ENCODE measurements at regions of chr20 and their contacts with region 1.

Region 1: GRCh38 chr20:22248051-22248667 is 336.2 kb downstream of the FOXA2 start:
- DNase-seq: no peak
- ATAC-seq: no peak
- H3K4me3 ChIP-seq: no peak overlapping the region
- H3K27ac ChIP-seq: no peak overlapping the region
- H3K4me1 ChIP-seq: no peaks in the 10 kb centered on the region
- H3K27me3 ChIP-seq: peaks cover 11% of the 10 kb centered on the region
- CTCF ChIP-seq: peak; percentile 10 to 62 (median 53); a peak in 4 of 6 replicates
- POLR2A ChIP-seq: no peak
- RAD21 ChIP-seq: peak; percentile 49

Region 2: DNA sequence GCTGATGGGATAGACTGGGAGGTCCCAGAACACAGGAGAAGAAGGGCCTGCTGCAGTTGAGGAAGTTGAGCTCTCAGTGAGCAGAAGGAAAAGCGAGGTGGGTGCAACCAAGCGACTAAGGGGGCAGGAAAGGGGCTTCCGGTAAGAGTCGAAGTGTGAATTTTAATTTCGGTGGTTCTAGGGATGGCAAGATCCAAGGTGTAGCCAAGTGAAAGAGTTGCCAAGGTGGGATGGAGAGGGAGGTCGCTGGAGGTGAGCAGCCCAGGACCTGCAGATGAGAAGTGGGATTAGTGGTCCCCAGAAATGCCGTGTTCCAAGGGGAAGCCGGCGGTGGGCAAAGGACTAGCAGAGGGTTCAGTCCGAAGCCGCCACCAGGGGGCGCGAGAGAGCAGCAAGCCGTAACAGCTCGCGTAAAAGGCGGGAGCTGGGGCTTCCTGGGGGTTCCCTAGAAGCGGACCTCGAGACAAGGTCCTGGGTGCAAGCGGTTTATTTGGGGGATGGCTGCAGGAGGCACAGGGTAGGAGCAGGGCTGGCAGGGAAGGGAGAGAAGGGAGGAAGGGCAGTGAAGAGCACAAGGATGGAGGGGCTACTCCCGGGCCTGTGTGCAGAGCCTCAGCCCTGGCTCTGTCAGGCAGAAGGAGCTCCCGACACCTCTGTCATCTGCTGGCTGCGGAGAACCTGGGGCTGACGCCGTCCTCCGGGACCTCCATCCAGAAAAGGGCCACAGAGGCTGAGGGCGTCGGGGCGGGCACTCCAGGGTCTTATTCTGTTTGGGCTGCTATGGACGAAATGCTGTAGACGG is 439.1 kb before region 1 on chr20:
- CTCF ChIA-PET with region 1: no interaction called
- POLR2A ChIA-PET with region 1: no interaction called
- RAD21 ChIA-PET with region 1: no interaction called
- intact Hi-C with region 1: loop called (anchors 5 kb)
- DNase-seq: no peak
- ATAC-seq: no peak
- H3K4me3 ChIP-seq: no peak overlapping the region
- H3K27ac ChIP-seq: no peak overlapping the region
- H3K4me1 ChIP-seq: no peaks in the 10 kb centered on the region
- H3K27me3 ChIP-seq: no peaks in the 10 kb centered on the region
- CTCF ChIP-seq: peak in 2 of 3 experiments; percentile 64 to 75; a peak in 4 of 6 replicates
- POLR2A ChIP-seq: no peak
- RAD21 ChIP-seq: 0 out of 2 replicates have a peak, but pooled peaks have one; percentile 13

Region 3: GRCh38 chr20:22303523-22303922 is 55.4 kb after region 1 on chr20:
- CTCF ChIA-PET with region 1: no interaction called
- POLR2A ChIA-PET with region 1: no interaction called
- RAD21 ChIA-PET with region 1: no interaction called
- intact Hi-C with region 1: no loop called
- DNase-seq: peak; percentile 18
- ATAC-seq: peak; percentile 75
- H3K4me3 ChIP-seq: no peak overlapping the region
- H3K27ac ChIP-seq: no peak overlapping the region
- H3K4me1 ChIP-seq: no peaks in the 10 kb centered on the region
- H3K27me3 ChIP-seq: peaks cover 20% of the 10 kb centered on the region; the same call in 1 of the 2 replicates
- CTCF ChIP-seq: peak in 2 of 3 experiments; percentile 52 to 66; a peak in 4 of 6 replicates
- POLR2A ChIP-seq: no peak
- RAD21 ChIP-seq: no peak